MCF 10A (cell line): ENCODE measurements at regions of chr10 and their contacts with region 1.

Region 1: GRCh38 chr10:96334616-96335526 is 23.9 kb downstream of the OPALIN start:
- DNase-seq: peak; percentile 53
- H3K4me3 Mint-ChIP-seq: no peak overlapping the region
- H3K27ac Mint-ChIP-seq: no peak overlapping the region
- H3K4me1 Mint-ChIP-seq: no peaks in the 10 kb centered on the region
- H3K27me3 Mint-ChIP-seq: peaks cover 59% of the 10 kb centered on the region
- CTCF ChIP-seq: peak; percentile 53

Region 2: DNA sequence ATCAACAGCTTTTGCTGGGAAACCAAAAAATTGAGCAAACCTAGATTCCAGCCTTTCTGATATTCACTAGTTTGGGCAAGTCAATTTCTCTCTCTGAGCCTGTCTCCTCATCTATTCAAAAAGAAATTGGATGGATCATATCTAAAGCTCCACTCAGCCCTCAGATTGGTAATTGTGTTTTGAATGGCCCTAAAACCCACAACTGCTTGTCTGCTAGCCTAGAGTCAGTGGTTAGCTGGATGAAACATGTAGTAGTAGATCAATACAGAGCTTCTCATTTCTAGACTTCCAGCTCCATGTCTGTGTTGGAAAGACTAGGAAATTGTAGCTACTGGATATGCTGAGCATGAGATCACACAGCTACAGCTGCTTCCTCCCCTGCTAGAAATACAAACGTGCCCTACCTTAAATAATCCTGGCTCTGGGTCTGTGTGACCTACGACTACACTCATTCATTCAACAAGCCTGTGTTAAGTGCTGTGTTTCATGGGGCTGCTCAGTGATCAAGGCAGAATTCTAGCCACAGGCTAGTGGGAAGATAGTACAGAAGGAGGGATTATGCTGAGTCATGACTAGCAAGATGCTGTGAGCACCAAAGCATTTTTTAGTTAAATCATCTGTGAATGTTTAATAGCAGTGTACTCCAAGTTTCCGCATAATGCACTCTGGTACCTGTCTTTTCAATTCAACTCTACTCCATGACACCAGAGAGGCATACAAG is 15.0 kb before region 1 on chr10:
- CTCF ChIA-PET with region 1: interaction called, 32 read pairs
- POLR2A ChIA-PET with region 1: no interaction called
- intact Hi-C with region 1: no loop called
- DNase-seq: no peak
- H3K4me3 Mint-ChIP-seq: no peak overlapping the region
- H3K27ac Mint-ChIP-seq: no peak overlapping the region
- H3K4me1 Mint-ChIP-seq: no peaks in the 10 kb centered on the region
- H3K27me3 Mint-ChIP-seq: peaks cover 37% of the 10 kb centered on the region
- CTCF ChIP-seq: no peak

Region 3: DNA sequence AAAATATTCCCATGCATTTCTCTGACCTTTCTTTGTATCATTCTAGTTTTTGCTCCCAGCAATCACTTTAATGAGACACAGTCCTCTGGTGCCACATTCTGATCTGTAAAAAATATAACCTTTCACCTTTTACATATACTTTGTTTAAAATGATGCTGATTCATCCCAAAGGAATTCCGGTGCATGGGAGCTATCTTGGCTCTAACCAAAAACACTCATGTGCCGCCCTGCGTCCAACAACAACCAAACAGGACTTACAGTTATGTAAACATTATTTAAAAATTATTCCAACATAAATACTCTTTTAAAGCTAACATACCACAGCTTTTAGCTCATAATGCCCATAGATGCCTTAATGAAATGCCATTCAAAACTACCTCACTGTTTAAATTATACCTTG is 31.6 kb after region 1 on chr10:
- CTCF ChIA-PET with region 1: interaction called, 33 read pairs
- POLR2A ChIA-PET with region 1: no interaction called
- intact Hi-C with region 1: no loop called
- DNase-seq: peak; percentile 71
- H3K4me3 Mint-ChIP-seq: no peak overlapping the region
- H3K27ac Mint-ChIP-seq: no peak overlapping the region
- H3K4me1 Mint-ChIP-seq: peaks cover 6% of the 10 kb centered on the region
- H3K27me3 Mint-ChIP-seq: no peaks in the 10 kb centered on the region
- CTCF ChIP-seq: no peak

Region 4: DNA sequence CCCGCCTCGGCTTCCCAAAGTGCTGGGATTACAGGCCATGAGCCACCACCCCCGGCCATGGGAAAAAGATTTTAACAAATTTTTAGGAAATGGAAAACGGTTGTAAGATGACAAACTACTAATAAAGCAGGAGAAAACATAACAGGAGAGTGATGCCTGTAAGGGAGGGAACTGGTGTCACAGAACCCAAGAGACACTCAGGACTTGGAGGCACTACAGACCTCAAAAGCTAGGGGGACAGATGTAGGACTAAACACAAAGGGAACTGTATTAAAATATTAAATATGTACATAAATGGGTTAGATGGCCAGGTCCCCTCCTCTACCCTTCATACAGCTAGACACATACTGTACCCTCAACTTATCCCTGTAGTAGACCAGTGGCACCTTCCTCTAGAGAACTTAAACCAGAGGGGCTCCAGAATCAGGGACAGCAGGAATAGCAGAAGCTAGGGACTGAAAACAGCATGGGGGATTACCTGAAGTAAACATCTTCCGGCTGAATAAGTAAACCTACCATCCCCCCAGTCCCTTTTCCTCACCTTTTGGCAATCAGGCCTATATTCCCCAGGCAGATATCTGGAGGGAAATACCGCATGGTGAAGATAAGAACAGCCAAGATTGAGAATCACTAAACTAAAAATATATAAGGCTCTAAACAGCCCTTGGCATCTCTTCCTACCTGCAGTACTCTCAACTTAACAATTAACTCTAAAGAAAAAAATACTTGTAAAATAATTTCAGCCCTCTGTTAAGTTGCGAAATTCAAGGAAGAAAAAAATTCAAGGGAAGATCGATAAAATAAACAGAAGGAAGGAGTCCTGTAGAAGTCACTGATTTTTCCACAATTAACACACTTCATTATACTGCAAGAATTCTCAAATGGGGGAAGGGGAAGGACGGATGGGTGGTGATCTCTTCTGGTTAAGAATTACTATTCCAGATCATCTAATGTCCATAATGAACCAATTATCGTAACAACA is 236.4 kb after region 1 on chr10:
- CTCF ChIA-PET with region 1: no interaction called
- POLR2A ChIA-PET with region 1: no interaction called
- intact Hi-C with region 1: no loop called
- DNase-seq: no peak
- H3K4me3 Mint-ChIP-seq: no peak overlapping the region
- H3K27ac Mint-ChIP-seq: no peak overlapping the region
- H3K4me1 Mint-ChIP-seq: peaks cover 18% of the 10 kb centered on the region
- H3K27me3 Mint-ChIP-seq: no peaks in the 10 kb centered on the region
- CTCF ChIP-seq: no peak